ENCODE measurements at regions of chr10 and their contacts with region 1.

Region 1: DNA sequence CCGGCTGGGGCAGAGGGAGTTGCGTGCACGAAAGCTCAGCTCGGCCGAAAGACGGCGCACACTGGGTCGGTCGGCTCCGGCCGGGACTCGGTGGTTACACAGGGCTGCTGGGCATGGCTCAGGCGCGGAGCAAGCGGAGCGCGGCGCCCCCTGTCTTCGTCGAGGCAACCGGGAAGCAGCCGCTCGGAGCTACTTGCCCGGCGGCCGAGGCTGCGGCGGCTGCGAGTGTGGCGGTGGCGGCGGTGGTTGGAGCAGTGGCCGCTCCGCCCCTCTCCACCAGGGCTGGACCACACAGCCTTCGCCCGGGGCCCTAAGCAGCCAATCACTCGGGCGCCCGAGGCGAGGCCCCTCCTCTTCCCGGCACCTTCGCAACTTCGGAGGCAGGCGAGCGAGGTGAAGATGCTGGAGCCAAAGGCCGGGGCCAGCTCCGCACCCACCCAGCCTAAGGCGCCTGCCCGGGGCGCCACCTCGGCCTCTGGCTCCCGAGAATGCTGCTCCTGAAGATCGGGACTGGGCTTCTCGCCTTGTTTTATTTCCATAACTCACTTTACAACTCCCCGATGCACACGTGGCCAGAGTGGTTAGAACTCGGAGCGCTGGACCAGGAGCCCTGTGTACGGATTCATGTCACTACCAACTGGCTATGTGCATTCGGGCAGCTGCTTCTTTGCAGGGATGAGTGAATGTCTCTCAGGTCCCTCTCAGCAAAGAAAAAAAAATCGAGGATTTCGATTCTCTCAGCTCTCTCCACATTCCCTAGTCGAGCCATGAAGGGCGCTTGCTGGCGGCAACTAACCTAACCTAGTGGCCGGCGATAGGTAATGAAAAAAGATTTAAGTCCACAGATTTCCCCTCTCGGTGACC is at the start of gene TLL2:
- DNase-seq: peak; percentile 71
- ATAC-seq: peak; percentile 80
- H3K4me3 Mint-ChIP-seq: peak within 1 kb of the TSS; percentile 60
- H3K27ac Mint-ChIP-seq: no peak within 1 kb of the TSS
- H3K4me1 Mint-ChIP-seq: peaks cover 13% of the 10 kb centered on the region
- H3K27me3 Mint-ChIP-seq: peaks cover 43% of the 10 kb centered on the region
- CTCF ChIP-seq: peak; percentile 34
- total RNA-seq, gene TLL2: 0.09 to 0.18 TPM

Region 2: DNA sequence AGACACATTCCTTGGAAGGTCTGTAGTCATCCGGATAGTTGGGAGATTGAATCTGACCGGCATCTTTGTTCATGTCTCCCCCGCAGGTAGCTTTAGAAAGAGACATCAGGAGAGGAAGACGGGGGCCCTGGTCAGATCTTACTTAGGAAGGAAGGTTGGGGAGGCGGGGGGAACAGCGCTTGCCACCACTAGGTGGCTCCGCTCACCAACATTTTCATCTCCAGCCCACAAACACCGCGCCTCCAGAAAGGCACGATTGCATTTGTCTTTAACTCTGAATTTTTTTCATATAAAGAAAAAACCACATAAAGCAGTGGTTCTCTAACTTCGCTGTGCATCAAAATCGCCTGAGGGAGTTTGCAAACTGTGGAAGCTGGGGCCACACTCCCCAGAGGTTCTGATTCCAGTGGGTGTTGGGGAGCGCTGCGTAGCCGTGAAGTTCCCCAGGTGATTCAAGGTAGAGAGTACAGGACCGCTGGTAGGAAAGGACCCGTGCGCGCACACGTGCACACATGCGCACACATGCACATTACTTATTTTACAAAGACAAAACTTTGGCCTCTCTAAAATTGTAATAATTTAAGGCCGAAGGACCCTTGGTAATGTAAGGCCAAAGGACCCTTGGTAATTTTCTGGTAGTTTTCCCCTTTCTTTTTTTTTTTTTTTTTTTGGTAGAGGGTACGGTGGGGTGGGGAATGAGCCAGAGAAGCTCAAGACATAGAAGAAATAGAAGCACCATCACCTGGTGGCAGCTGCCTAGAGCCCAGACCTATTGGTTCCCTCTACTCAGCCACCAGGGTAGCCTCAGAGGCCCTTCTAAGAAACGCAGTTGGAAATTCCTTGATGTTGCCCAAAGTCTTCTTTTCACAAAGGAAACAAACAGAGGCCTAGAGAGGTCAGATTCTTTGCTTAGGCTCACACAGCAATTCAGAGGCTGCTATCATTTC is 117.7 kb before region 1 on chr10:
- CTCF ChIA-PET with region 1: interaction called, 30 read pairs
- POLR2A ChIA-PET with region 1: no interaction called
- intact Hi-C with region 1: loop called (anchors 5 kb)
- DNase-seq: peak; percentile 79
- ATAC-seq: peak; percentile 94
- H3K4me3 Mint-ChIP-seq: no peak overlapping the region
- H3K27ac Mint-ChIP-seq: no peak overlapping the region
- H3K4me1 Mint-ChIP-seq: no peaks in the 10 kb centered on the region
- H3K27me3 Mint-ChIP-seq: peaks cover 16% of the 10 kb centered on the region
- CTCF ChIP-seq: peak; percentile 89

Region 3: DNA sequence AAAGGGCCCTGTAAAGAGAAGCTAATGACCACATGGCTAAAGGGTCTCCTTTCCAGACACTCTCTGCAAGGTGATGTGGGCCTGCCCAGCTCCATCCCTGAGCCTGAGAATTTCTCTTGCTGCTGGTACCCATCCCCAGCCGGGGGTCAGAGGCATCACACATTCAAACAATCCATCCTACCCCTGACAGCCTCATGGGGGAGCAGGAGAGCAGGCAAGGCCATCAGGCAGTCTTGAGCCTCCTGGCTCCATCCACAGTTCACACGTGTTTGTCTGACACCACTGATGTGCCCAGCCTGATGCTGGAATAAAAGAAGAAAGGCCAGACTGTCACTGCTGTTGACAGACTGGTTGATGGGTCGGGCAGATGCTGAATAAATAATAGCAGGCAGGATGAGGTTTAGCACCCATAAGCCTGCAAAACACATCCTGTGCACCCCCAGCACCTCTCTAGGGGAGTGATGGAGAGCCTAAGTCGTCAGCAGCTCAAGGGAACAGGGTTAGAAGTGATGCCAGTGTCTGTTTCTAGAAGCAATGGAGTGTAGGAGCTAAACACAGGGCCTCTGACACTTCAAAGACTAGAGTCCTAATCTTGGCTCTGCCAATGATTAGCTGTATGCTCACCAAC is 43.7 kb before region 1 on chr10:
- CTCF ChIA-PET with region 1: interaction called, 13 read pairs
- POLR2A ChIA-PET with region 1: no interaction called
- intact Hi-C with region 1: no loop called
- DNase-seq: peak; percentile 56
- ATAC-seq: peak; percentile 82
- H3K4me3 Mint-ChIP-seq: no peak overlapping the region
- H3K27ac Mint-ChIP-seq: no peak overlapping the region
- H3K4me1 Mint-ChIP-seq: no peaks in the 10 kb centered on the region
- H3K27me3 Mint-ChIP-seq: peaks cover 10% of the 10 kb centered on the region
- CTCF ChIP-seq: peak; percentile 54

Region 4: GRCh38 chr10:96491299-96491698 is 22.6 kb before region 1 on chr10:
- CTCF ChIA-PET with region 1: interaction called, 12 read pairs
- POLR2A ChIA-PET with region 1: no interaction called
- intact Hi-C with region 1: no loop called
- DNase-seq: no peak
- ATAC-seq: no peak
- H3K4me3 Mint-ChIP-seq: no peak overlapping the region
- H3K27ac Mint-ChIP-seq: no peak overlapping the region
- H3K4me1 Mint-ChIP-seq: no peaks in the 10 kb centered on the region
- H3K27me3 Mint-ChIP-seq: peaks cover 6% of the 10 kb centered on the region
- CTCF ChIP-seq: no peak

Region 5: DNA sequence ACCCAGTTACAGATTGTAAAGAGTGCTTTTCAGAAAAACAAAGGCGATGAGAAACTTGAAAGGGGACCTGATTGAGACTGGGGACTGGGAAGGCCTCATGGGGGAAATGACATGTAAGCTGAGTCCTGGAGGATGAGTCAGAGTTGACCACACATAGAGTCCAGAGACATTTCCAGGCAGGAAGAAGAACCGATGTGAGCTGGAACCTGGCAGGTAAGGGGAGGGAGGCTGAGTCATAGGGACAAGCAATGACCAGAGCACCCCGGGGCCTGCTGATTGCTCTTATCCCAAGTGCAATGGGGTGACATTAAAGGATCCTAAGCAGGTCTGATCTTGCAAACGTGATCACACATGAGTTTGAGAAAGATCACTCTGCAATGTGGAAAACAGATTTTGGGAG is 11.9 kb before region 1 on chr10:
- CTCF ChIA-PET with region 1: interaction called, 12 read pairs
- POLR2A ChIA-PET with region 1: interaction called, 3 read pairs
- intact Hi-C with region 1: no loop called
- DNase-seq: no peak
- ATAC-seq: no peak
- H3K4me3 Mint-ChIP-seq: no peak overlapping the region
- H3K27ac Mint-ChIP-seq: no peak overlapping the region
- H3K4me1 Mint-ChIP-seq: no peaks in the 10 kb centered on the region
- H3K27me3 Mint-ChIP-seq: no peaks in the 10 kb centered on the region
- CTCF ChIP-seq: no peak

Region 6: GRCh38 chr10:96524741-96525140 is 10.8 kb after region 1 on chr10:
- CTCF ChIA-PET with region 1: interaction called, 16 read pairs
- POLR2A ChIA-PET with region 1: interaction called, 3 read pairs
- intact Hi-C with region 1: no loop called
- DNase-seq: no peak
- ATAC-seq: no peak
- H3K4me3 Mint-ChIP-seq: no peak overlapping the region
- H3K27ac Mint-ChIP-seq: no peak overlapping the region
- H3K4me1 Mint-ChIP-seq: no peaks in the 10 kb centered on the region
- H3K27me3 Mint-ChIP-seq: no peaks in the 10 kb centered on the region
- CTCF ChIP-seq: no peak

Region 7: DNA sequence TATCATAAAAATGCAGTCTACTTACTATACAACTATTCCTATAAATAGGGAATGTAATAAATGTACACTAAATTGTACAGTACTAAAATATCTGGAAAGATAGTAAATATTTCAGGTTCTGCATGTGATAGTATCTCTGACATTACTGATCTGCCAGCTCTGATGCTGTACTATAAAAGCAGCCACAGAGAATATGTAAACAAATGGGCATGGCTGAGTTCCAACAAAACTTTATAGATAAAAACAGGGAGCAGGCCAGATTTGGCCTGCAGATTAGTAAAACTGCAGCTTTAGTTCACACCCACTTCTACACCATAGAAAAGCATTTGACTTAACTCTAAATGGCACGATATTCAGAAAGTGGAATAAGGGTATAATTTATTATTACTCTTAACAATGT is 18.6 kb after region 1 on chr10:
- CTCF ChIA-PET with region 1: interaction called, 12 read pairs
- POLR2A ChIA-PET with region 1: no interaction called
- intact Hi-C with region 1: no loop called
- DNase-seq: no peak
- ATAC-seq: no peak
- H3K4me3 Mint-ChIP-seq: no peak overlapping the region
- H3K27ac Mint-ChIP-seq: no peak overlapping the region
- H3K4me1 Mint-ChIP-seq: peaks cover 10% of the 10 kb centered on the region
- H3K27me3 Mint-ChIP-seq: no peaks in the 10 kb centered on the region
- CTCF ChIP-seq: no peak